Activated T-helper 2 cell treated with anti-CD3 and anti-CD28 coated beads, Interferon-gamma antibody, Interleukin-2, Interleukin-4, amounts not matched to agents 10 μg/mL and 5 μg/mL and 100 μg/mL, durations not matched to agents 14 hours and 24 hours and 36 hours (primary cell): ENCODE measurements at regions of chr18 and their contacts with region 1.

Region 1: GRCh38 chr18:62368100-62368499 is 43.0 kb downstream of the TNFRSF11A start:
- DNase-seq: no peak
- H3K4me3 Mint-ChIP-seq: no peak overlapping the region
- H3K27ac Mint-ChIP-seq: peak overlapping the region; percentile 57
- H3K4me1 Mint-ChIP-seq: peaks cover 60% of the 10 kb centered on the region
- H3K27me3 Mint-ChIP-seq: no peaks in the 10 kb centered on the region

Region 2: DNA sequence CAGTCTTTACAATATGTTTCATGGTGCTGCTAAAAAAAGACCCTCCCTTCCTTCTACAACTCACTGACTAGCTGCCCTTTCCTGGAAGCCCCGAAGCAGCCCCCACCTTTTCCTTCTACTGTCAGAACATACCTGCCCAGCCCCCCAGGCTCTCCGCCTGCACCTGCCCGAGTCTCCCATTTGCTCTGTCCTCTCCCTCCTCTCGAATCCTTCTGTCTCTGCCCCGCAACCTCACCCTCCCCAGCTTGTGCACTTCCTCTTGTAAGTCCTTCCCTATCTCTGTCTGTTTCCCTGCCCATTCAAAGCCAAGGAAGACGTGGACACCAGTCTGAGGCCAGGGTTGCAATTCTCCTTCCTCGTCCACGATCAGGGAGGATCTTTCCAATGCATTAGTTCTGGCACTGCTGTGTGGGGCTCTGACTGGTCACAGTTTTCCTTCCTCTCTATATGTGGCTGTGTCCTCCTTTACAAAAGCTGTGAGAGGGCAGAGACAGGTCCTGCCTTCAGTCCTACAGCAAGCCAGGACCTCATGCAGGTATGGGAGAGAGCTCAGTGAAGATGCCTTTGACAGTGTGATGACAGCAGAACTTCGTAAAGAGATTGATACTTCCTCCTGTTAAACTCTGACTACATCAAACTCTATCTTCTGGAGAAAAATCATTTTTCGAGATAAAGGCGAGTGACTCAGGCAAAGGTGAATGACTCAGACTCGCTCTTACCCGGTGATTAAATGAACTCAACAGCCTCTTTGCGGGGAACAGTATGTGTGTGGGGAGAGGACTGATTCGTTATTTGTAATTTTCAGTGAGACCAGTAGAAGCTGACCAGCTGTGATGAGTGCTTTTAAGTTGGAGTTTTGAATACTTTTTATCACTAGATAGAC is 28.8 kb before region 1 on chr18:
- intact Hi-C with region 1: loop called (anchors 1 kb)
- DNase-seq: peak; percentile 23
- H3K4me3 Mint-ChIP-seq: peak overlapping the region; percentile 61
- H3K27ac Mint-ChIP-seq: peak overlapping the region; percentile 96
- H3K4me1 Mint-ChIP-seq: peaks cover 69% of the 10 kb centered on the region
- H3K27me3 Mint-ChIP-seq: no peaks in the 10 kb centered on the region

Region 3: DNA sequence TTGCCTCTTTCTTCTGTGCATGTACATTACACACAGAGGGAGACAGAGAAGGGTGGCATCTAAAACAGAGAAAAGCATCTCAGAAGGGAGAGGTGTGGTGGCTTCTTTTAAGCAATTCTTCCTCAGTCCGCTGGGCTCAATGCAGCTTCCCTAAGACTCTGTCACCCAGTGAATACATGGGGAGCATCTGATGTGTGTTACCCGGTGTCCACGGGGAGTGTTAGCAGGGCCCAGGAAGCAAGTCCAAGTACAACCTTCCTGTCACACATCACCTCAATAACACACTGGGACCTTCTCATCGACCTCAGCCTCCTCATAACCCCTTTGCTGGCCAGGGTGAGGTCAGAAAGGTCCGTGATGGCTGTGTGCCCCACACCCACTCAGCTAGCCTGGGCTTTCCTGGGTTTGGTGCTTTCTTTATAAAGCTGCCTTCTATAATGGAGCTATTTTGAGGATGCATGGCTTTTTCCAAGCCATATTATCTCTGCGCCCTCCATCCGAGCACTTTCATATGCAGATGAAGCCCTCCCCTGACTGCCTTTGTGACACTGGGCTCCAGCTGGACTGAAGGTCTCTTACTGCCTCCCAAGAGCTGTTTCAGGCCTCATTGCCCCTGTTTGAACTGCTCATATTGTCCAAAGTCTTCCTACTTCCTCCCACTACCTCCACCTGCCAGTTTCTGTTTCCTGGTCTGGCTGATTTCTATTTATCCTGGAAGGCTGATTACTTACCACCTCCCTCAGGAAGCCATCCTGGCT is 21.6 kb before region 1 on chr18:
- intact Hi-C with region 1: loop called (anchors 1 kb)
- DNase-seq: no peak
- H3K4me3 Mint-ChIP-seq: peak overlapping the region; percentile 61
- H3K27ac Mint-ChIP-seq: peak overlapping the region; percentile 90
- H3K4me1 Mint-ChIP-seq: peaks cover 61% of the 10 kb centered on the region
- H3K27me3 Mint-ChIP-seq: no peaks in the 10 kb centered on the region

Region 4: GRCh38 chr18:62450546-62451406 is 82.7 kb after region 1 on chr18:
- intact Hi-C with region 1: no loop called
- DNase-seq: no peak
- H3K4me3 Mint-ChIP-seq: no peak overlapping the region
- H3K27ac Mint-ChIP-seq: no peak overlapping the region
- H3K4me1 Mint-ChIP-seq: peaks cover 24% of the 10 kb centered on the region
- H3K27me3 Mint-ChIP-seq: no peaks in the 10 kb centered on the region